ENCODE measurements at regions of chr1 and their contacts with region 1.

Region 1: GRCh38 chr1:51063121-51063520 is 38.9 kb upstream of the C1orf185 start:
- DNase-seq: peak; percentile 98
- ATAC-seq: peak; percentile 91
- H3K4me3 ChIP-seq: 0 out of 2 replicates have a peak overlapping the region, but pooled peaks have one; percentile 10
- H3K27ac ChIP-seq: peak overlapping the region; percentile 86
- H3K4me1 ChIP-seq: peaks cover 34% of the 10 kb centered on the region
- H3K27me3 ChIP-seq: no peaks in the 10 kb centered on the region
- CTCF ChIP-seq: no peak

Region 2: DNA sequence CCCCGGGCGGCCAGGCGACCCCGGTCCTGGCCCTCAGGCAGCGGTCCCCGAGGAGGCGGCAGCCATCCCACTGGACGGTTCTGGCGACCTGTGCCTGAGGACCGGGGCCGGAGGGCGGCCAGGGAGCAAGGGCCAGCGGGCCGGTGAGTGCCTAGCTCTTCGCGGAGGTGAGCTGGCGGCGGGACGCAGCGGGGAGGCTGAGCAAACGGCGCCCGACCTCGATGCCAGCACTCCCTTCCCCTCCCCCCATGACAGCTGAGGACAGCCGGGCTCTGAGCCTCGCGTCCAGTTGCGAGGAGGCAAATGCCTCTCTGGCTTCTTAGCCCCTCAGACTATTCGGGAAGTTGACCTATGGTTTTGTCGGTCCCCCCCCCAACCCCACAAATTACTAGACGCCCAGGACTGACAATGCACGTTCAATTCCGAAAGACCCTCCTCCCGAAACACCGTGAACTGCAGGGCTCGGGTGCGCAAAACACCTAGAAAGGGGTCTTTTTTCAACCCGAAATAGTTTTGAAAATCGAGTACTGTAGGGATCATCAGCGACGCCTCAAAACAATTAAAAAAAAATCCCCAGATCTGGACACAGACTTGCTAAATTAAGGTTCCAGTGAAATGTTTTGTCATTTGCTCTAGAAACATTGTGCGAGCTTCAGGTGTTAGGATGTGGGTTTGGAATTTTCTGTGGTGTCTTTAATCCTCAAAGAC is 84.8 kb before region 1 on chr1:
- CTCF ChIA-PET with region 1: no interaction called
- POLR2A ChIA-PET with region 1: no interaction called
- intact Hi-C with region 1: loop called (anchors 2 kb)
- DNase-seq: peak; percentile 74
- ATAC-seq: peak; percentile 53
- H3K4me3 ChIP-seq: peak overlapping the region; percentile 85
- H3K27ac ChIP-seq: peak overlapping the region; percentile 49
- H3K4me1 ChIP-seq: peaks cover 42% of the 10 kb centered on the region
- H3K27me3 ChIP-seq: no peaks in the 10 kb centered on the region
- CTCF ChIP-seq: no peak

Region 3: GRCh38 chr1:51000160-51000559 is 63.0 kb before region 1 on chr1:
- CTCF ChIA-PET with region 1: no interaction called
- POLR2A ChIA-PET with region 1: no interaction called
- intact Hi-C with region 1: no loop called
- DNase-seq: no peak
- ATAC-seq: no peak
- H3K4me3 ChIP-seq: no peak overlapping the region
- H3K27ac ChIP-seq: no peak overlapping the region
- H3K4me1 ChIP-seq: no peaks in the 10 kb centered on the region
- H3K27me3 ChIP-seq: no peaks in the 10 kb centered on the region
- CTCF ChIP-seq: no peak

Region 4: GRCh38 chr1:51303751-51304251 is 240.7 kb after region 1 on chr1:
- CTCF ChIA-PET with region 1: no interaction called
- POLR2A ChIA-PET with region 1: no interaction called
- intact Hi-C with region 1: no loop called
- DNase-seq: no peak
- ATAC-seq: no peak
- H3K4me3 ChIP-seq: no peak overlapping the region
- H3K27ac ChIP-seq: no peak overlapping the region
- H3K4me1 ChIP-seq: no peaks in the 10 kb centered on the region
- H3K27me3 ChIP-seq: no peaks in the 10 kb centered on the region
- CTCF ChIP-seq: no peak